ENCODE measurements at regions of chr5 and their contacts with region 1.

Region 1: GRCh38 chr5:143824851-143825720 is 13.1 kb downstream of the HMHB1 start:
- DNase-seq: peak; percentile 75 to 91 (median 82)
- ATAC-seq: peak; percentile 94
- H3K4me3 ChIP-seq: no peak overlapping the region
- H3K4me3 Mint-ChIP-seq: no peak overlapping the region
- H3K27ac ChIP-seq: no peak overlapping the region
- H3K27ac Mint-ChIP-seq: no peak overlapping the region
- H3K4me1 ChIP-seq: peaks cover 13% of the 10 kb centered on the region
- H3K4me1 Mint-ChIP-seq: peaks cover 17% of the 10 kb centered on the region
- H3K27me3 ChIP-seq: no peaks in the 10 kb centered on the region
- H3K27me3 Mint-ChIP-seq: peaks cover 4% of the 10 kb centered on the region
- CTCF ChIP-seq: peak; percentile 86

Region 2: GRCh38 chr5:142748568-142749249 is 1076.4 kb before region 1 on chr5:
- CTCF ChIA-PET with region 1: no interaction called
- POLR2A ChIA-PET with region 1: no interaction called
- intact Hi-C with region 1: loop called in 1 of 2 experiments (anchors 10 kb)
- DNase-seq: peak; percentile 29 to 74 (median 50)
- ATAC-seq: peak; percentile 55
- H3K4me3 ChIP-seq: no peak overlapping the region
- H3K4me3 Mint-ChIP-seq: no peak overlapping the region
- H3K27ac ChIP-seq: no peak overlapping the region
- H3K27ac Mint-ChIP-seq: no peak overlapping the region
- H3K4me1 ChIP-seq: no peaks in the 10 kb centered on the region
- H3K4me1 Mint-ChIP-seq: no peaks in the 10 kb centered on the region
- H3K27me3 ChIP-seq: no peaks in the 10 kb centered on the region
- H3K27me3 Mint-ChIP-seq: peaks cover 10% of the 10 kb centered on the region
- CTCF ChIP-seq: peak; percentile 70

Region 3: DNA sequence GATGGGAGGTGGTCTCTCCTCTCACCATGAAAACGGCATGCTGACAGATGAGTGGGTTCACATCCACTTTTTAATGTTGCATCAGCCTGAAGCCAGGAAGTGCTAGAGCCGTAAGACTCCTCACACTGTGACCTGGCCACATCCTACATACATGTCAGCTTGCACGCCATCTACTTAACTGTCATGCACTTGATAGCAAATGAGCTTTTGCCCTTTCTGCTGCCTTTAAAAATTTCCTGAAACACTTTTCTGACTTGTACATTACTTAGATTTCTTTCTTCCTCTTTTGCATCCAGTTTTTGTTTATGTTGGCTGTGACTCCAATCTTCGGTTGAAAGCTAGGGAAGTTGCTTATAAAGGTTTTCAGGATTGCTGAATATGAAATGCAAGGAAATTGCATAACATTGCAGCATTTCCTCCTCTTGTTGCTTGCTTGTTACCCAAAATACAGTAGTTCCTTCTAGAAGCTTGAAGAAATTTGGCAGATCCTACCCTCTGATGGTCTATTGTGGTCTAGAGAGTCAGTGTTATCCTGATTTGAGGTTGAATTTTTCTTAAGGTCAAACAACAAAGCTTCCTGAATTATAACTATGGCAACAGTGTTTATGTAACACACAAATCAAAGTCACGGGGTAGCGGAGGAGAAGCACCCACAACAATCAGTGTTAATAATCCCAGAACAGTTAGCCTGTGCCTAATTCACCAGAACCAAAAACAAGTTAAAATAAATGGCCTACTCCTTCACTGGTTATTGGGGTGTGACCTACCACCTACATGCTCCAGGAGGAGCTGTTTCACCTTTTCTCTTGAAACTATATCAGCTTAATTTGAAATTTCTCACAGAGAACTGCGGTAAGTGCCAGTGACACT is 822.4 kb before region 1 on chr5:
- CTCF ChIA-PET with region 1: interaction called, 6 read pairs
- POLR2A ChIA-PET with region 1: interaction called, 9 read pairs
- intact Hi-C with region 1: loop called (anchors 1 to 5 kb)
- DNase-seq: peak in 13 of 14 experiments; percentile 10 to 91 (median 37)
- ATAC-seq: peak; percentile 83
- H3K4me3 ChIP-seq: peak overlapping the region; percentile 3
- H3K4me3 Mint-ChIP-seq: peak overlapping the region; percentile 55
- H3K27ac ChIP-seq: peak overlapping the region; percentile 76 to 87
- H3K27ac Mint-ChIP-seq: peak overlapping the region; percentile 91
- H3K4me1 ChIP-seq: peaks cover 33% of the 10 kb centered on the region
- H3K4me1 Mint-ChIP-seq: peaks cover 48% of the 10 kb centered on the region
- H3K27me3 ChIP-seq: no peaks in the 10 kb centered on the region
- H3K27me3 Mint-ChIP-seq: no peaks in the 10 kb centered on the region
- CTCF ChIP-seq: peak; percentile 73

Region 4: DNA sequence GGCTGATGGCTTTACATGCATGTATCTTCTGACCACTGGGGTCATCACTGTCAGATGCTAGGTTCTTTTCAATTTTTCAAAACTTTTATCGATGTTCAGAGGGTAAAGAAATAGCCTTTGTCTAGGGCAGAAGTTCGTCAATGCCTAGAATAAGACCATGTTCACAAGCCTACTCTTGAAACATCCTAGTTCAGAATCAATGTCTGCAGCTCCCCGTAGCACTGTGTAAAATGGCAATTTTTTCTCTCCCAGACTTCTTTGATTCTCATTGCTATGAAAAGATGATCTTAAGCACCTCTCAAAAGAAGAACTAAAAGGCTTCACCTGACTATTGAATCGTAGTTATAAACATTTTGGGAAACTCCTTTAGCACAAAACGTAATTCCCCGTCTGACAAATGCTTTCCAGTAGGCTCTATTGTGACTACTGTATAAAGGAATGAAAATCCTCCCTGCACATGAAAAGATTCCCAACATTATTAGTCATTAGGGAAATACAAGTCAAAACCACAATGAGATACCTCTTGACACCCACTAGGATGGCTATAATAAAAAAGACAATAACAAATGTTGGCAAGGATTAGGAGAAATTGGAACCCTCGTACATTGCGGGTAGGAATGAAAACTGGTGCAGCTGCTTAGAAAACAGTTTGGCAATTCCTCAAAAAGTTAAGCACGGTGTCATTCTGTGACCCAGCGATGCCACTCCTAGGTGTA is 791.4 kb before region 1 on chr5:
- CTCF ChIA-PET with region 1: no interaction called
- POLR2A ChIA-PET with region 1: no interaction called
- intact Hi-C with region 1: loop called in 1 of 2 experiments (anchors 5 kb)
- DNase-seq: no peak
- ATAC-seq: no peak
- H3K4me3 ChIP-seq: no peak overlapping the region
- H3K4me3 Mint-ChIP-seq: no peak overlapping the region
- H3K27ac ChIP-seq: no peak overlapping the region
- H3K27ac Mint-ChIP-seq: no peak overlapping the region
- H3K4me1 ChIP-seq: peaks cover 25% of the 10 kb centered on the region
- H3K4me1 Mint-ChIP-seq: peaks cover 25% of the 10 kb centered on the region
- H3K27me3 ChIP-seq: no peaks in the 10 kb centered on the region
- H3K27me3 Mint-ChIP-seq: no peaks in the 10 kb centered on the region
- CTCF ChIP-seq: no peak

Region 5: GRCh38 chr5:143309661-143310431 is 515.2 kb before region 1 on chr5:
- CTCF ChIA-PET with region 1: no interaction called
- POLR2A ChIA-PET with region 1: no interaction called
- intact Hi-C with region 1: loop called in 1 of 2 experiments (anchors 10 kb)
- DNase-seq: no peak
- ATAC-seq: no peak
- H3K4me3 ChIP-seq: no peak overlapping the region
- H3K4me3 Mint-ChIP-seq: no peak overlapping the region
- H3K27ac ChIP-seq: no peak overlapping the region
- H3K27ac Mint-ChIP-seq: no peak overlapping the region
- H3K4me1 ChIP-seq: no peaks in the 10 kb centered on the region
- H3K4me1 Mint-ChIP-seq: peaks cover 31% of the 10 kb centered on the region
- H3K27me3 ChIP-seq: no peaks in the 10 kb centered on the region
- H3K27me3 Mint-ChIP-seq: no peaks in the 10 kb centered on the region
- CTCF ChIP-seq: no peak

Measured in CD4-positive, alpha-beta T cell (primary cell).